Heart left ventricle (tissue), 16 donors: ENCODE measurements at regions of chr11 and their contacts with region 1.

Region 1: GRCh38 chr11:17230867-17231851 is 23.4 kb upstream of the PIK3C2A start:
- DNase-seq: no peak
- ATAC-seq: no peak
- H3K4me3 ChIP-seq: no peak overlapping the region
- H3K27ac ChIP-seq: no peak overlapping the region
- H3K4me1 ChIP-seq: peaks cover 0 to 7% (median 0%) of the 10 kb centered on the region in 12 donors
- H3K27me3 ChIP-seq: no peaks in the 10 kb centered on the region
- CTCF ChIP-seq: no peak
- POLR2A ChIP-seq: no peak

Region 2: GRCh38 chr11:17528181-17528691 is 297.1 kb after region 1 on chr11:
- intact Hi-C with region 1: loop called in 3 of 10 experiments (anchors 5 to 10 kb)
- DNase-seq: peak in 4 of 5 donors; percentile 31 to 57 (median 50)
- ATAC-seq: peak; percentile 32 to 82 (median 72)
- H3K4me3 ChIP-seq: no peak overlapping the region
- H3K27ac ChIP-seq: no peak overlapping the region
- H3K4me1 ChIP-seq: peaks cover 0 to 19% (median 1%) of the 10 kb centered on the region in 12 donors
- H3K27me3 ChIP-seq: no peaks in the 10 kb centered on the region
- CTCF ChIP-seq: peak; percentile 50 to 75 (median 69)
- POLR2A ChIP-seq: no peak